Astrocyte of the cerebellum (primary cell): ENCODE measurements at regions of chr3 and their contacts with region 1.

Region 1: GRCh38 chr3:109597444-109597843 is 260.1 kb upstream of the DPPA4 start:
- DNase-seq: no peak
- H3K4me3 ChIP-seq: no peak overlapping the region
- CTCF ChIP-seq: no peak

Region 2: DNA sequence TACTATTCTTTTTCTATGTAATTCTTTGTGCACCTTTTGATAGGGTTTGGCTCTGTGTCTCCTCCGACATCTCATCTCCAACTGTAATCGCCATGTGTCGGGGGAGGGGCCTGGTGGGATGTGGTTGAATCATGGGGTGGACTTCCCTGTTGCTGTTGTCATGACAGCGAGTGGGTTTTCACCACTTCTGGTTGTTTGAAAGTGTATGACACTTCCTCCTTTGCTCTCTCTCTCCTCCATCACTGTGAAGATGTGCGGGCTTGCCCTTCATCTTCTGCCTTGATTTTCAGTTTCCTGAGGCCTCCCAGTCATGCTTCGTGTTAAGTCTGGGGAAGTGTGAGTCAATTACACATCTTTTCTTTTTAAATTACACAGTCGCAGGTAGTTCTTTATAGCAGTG is 34.3 kb before region 1 on chr3:
- in situ Hi-C with region 1: no loop called
- DNase-seq: no peak
- H3K4me3 ChIP-seq: no peak overlapping the region
- CTCF ChIP-seq: no peak

Region 3: DNA sequence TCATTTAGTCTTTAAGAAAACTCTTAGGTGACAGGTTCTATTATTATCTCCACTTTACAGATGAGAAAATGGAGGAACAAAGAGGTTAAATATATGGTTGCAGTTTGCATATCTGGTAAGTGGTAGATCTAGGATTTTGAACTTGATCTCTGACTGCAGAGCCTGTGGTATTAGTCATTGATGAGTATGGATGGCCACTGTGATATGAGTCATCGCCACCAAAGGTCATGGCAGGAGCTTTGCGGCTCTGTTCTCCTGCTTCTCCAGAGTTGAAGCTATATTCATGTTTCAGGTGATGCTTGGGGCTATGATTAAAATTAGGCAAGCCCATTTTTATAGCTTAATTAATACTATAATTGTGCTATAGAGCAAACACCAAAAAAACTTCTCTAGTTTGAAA is 46.1 kb after region 1 on chr3:
- in situ Hi-C with region 1: loop called (anchors 5 kb)
- DNase-seq: peak; percentile 32
- H3K4me3 ChIP-seq: no peak overlapping the region
- CTCF ChIP-seq: no peak